GM12878 (cell line): ENCODE measurements at regions of chr11 and their contacts with region 1.

Region 1: DNA sequence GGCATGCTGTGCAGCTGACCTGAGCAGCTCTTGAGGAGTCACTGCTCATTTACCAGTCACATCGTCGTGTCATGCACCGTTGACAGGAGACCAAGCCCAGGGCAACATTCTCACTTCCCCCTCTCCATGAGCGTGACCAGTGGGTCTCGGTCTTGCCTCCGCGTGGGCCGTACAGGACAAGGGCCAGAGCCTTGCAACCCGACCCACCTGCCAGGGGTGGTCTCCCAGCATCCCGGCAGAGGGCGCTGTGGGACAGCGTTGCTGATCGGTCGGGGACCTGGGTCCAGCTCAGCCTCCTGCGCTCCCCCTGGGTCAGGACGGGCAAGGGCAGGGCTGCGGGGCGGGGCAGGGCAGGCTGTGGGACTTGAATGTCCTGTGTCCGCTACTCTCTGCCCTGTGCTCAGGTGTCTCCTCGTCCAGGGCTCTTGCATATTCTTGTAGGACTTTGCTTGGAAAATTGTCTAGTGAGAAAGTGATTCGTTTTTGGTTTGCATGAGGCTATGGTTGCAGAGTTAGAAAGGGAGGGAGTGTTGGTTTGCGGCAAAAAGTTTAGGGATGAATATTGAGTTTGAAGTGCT is 16.2 kb downstream of the EIF4G2 start:
- DNase-seq: peak; percentile 19
- ATAC-seq: peak; percentile 97
- H3K4me3 ChIP-seq: no peak overlapping the region
- H3K27ac ChIP-seq: no peak overlapping the region
- H3K4me1 ChIP-seq: peaks cover 4% of the 10 kb centered on the region
- H3K27me3 ChIP-seq: no peaks in the 10 kb centered on the region
- CTCF ChIP-seq: peak; percentile 95 to 97 (median 97)
- EP300 ChIP-seq: no peak
- POLR2A ChIP-seq: no peak
- RAD21 ChIP-seq: peak; percentile 96

Region 2: DNA sequence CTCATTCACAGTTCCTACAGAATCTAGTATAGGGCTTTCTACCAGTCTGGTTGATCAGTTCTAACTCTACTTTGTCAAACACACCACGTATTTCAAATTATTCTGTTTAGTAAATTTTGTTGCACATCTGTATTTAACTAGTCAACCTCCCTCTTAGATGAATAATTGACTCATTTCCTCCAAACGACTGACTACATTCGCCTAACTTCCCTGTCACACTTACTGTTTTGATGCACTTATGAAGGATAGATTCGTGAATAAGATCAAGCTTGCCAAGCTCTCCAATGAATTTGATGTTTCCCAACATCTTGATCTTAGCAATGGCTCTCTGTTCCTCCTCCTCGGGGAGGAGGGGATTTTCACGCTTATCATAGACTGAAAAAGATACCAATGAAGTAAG is 11.2 kb after region 1 on chr11:
- CTCF ChIA-PET with region 1: interaction called, 61 read pairs
- POLR2A ChIA-PET with region 1: interaction called, 13 read pairs
- RAD21 ChIA-PET with region 1: interaction called, 20 read pairs
- SMC1A ChIA-PET with region 1: interaction called, 14 read pairs
- in situ Hi-C with region 1: no loop called
- intact Hi-C with region 1: no loop called
- DNase-seq: no peak
- ATAC-seq: no peak
- H3K4me3 ChIP-seq: no peak overlapping the region
- H3K27ac ChIP-seq: no peak overlapping the region
- H3K4me1 ChIP-seq: peaks cover 10% of the 10 kb centered on the region; the same call in 1 of the 2 replicates
- H3K27me3 ChIP-seq: no peaks in the 10 kb centered on the region
- CTCF ChIP-seq: no peak
- EP300 ChIP-seq: no peak
- POLR2A ChIP-seq: no peak
- RAD21 ChIP-seq: no peak

Region 3: DNA sequence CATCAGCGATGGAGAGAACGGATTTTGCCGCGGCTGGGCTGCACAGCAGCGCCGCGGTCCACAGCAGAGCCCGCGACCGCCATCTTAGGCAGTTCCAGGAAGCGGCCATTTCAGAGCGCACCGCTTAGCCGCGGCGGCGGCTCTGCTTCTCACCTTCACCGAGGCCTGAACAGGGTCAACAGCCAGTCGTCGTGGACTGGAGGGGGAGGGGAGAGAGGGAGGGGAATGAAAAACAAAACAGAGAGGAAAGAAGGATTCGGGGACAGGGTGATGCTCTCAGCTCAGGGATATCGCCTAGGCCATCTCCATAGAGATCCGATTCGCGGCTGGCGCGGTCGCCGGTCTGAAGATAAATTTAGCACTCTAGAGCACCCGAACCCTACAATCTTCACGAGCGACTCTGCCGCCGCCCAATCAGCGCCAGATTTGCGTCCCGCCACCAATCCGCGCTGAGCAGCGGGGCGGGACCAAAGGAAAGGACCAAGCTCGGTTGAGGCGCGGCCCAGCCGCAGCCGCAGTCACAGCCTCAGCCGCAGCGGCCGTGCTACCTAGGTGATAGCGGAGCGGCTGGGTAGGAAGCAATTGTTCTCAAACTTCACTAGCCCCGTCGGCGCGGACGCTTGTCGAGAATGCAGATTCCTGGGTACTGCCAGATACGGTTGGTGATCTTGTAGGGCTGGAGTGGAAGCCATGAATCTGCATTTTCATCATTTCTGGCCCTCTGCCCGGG is 65.4 kb after region 1 on chr11 and contains the start of gene ZBED5:
- CTCF ChIA-PET with region 1: interaction called, 11 read pairs
- POLR2A ChIA-PET with region 1: interaction called, 5 read pairs
- RAD21 ChIA-PET with region 1: interaction called, 6 read pairs
- SMC1A ChIA-PET with region 1: interaction called, 3 read pairs
- in situ Hi-C with region 1: no loop called
- intact Hi-C with region 1: no loop called
- DNase-seq: peak; percentile 90
- ATAC-seq: peak; percentile 95
- H3K4me3 ChIP-seq: peak within 1 kb of the TSS; percentile 92
- H3K27ac ChIP-seq: peak within 1 kb of the TSS; percentile 87
- H3K4me1 ChIP-seq: no peaks in the 10 kb centered on the region
- H3K27me3 ChIP-seq: no peaks in the 10 kb centered on the region
- CTCF ChIP-seq: peak in 2 of 3 experiments; percentile 1 to 4; a peak in 1 of 6 replicates
- EP300 ChIP-seq: peak in 1 of 2 experiments; percentile 53; a peak in 3 of 4 replicates
- POLR2A ChIP-seq: peak; percentile 84
- RAD21 ChIP-seq: no peak
- polyA plus RNA-seq, gene ZBED5: 27.3 to 29.4 TPM

Region 4: GRCh38 chr11:10933455-10934292 is 141.2 kb after region 1 on chr11:
- CTCF ChIA-PET with region 1: interaction called, 33 read pairs
- POLR2A ChIA-PET with region 1: no interaction called
- RAD21 ChIA-PET with region 1: interaction called, 28 read pairs
- SMC1A ChIA-PET with region 1: interaction called, 11 read pairs
- in situ Hi-C with region 1: no loop called
- intact Hi-C with region 1: loop called (anchors 2 kb)
- DNase-seq: peak; percentile 39
- ATAC-seq: peak; percentile 94
- H3K4me3 ChIP-seq: no peak overlapping the region
- H3K27ac ChIP-seq: no peak overlapping the region
- H3K4me1 ChIP-seq: no peaks in the 10 kb centered on the region
- H3K27me3 ChIP-seq: peaks cover 4 to 13% of the 10 kb centered on the region in 2 experiments
- CTCF ChIP-seq: peak; percentile 91 to 97 (median 95); a peak in 5 of 6 replicates
- EP300 ChIP-seq: no peak
- POLR2A ChIP-seq: no peak
- RAD21 ChIP-seq: peak; percentile 86

Region 5: GRCh38 chr11:11028017-11028692 is 235.7 kb after region 1 on chr11:
- CTCF ChIA-PET with region 1: interaction called, 39 read pairs
- POLR2A ChIA-PET with region 1: interaction called, 3 read pairs
- RAD21 ChIA-PET with region 1: interaction called, 8 read pairs
- SMC1A ChIA-PET with region 1: interaction called, 22 read pairs
- in situ Hi-C with region 1: loop called (anchors 5 kb)
- intact Hi-C with region 1: no loop called
- DNase-seq: no peak
- ATAC-seq: peak; percentile 97
- H3K4me3 ChIP-seq: no peak overlapping the region
- H3K27ac ChIP-seq: no peak overlapping the region
- H3K4me1 ChIP-seq: no peaks in the 10 kb centered on the region
- H3K27me3 ChIP-seq: peaks cover 0 to 2% of the 10 kb centered on the region in 2 experiments; a peak in 2 of 4 replicates
- CTCF ChIP-seq: peak; percentile 81 to 88 (median 83)
- EP300 ChIP-seq: no peak
- POLR2A ChIP-seq: no peak
- RAD21 ChIP-seq: peak; percentile 74